ENCODE measurements at regions of chr10 and their contacts with region 1.

Region 1: DNA sequence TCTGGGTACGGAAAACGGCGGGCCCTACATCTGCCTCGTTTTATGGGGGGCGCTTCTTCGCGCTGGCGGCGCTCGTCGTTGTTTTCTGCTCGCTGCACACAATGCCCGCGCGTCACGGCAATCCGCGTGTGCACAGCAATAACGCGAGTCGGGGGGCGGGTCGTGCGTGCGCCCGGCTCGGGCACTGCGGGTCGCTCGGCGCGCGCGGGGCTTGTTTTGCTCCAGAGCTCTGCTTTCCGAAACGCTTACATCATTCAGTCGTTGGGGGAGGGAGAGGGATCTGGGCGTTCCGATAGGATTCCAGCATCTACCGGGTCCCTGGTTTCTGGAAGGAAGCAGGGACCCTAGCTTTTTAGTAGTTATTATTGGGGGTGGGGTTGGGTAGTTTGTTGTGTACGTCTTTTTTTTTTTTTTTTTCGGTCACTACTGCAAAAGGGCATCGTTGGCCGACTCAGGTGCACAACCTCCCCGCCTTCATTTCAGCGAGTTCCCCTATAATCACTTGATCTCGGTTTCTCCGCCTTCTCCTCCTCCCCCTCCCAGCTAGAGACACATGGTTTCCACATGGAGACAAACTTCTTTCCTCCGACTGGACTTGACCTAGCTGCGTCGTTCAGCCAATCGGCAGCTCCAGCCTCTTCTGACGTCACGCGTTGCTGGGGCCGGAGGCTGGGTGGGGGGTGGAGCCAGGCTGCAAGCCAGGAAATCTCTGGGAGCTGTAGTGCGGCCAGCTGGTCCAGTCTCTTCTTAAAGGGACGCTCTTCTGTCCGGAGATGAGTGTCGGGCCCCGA is 3.5 kb downstream of the MXI1 start:
- DNase-seq: peak; percentile 97
- H3K4me3 ChIP-seq: peak overlapping the region; percentile 79
- H3K27ac ChIP-seq: peak overlapping the region; percentile 56
- H3K4me1 ChIP-seq: peaks cover 55% of the 10 kb centered on the region
- CTCF ChIP-seq: peak; percentile 21; the same call in 1 of the 2 replicates

Region 2: DNA sequence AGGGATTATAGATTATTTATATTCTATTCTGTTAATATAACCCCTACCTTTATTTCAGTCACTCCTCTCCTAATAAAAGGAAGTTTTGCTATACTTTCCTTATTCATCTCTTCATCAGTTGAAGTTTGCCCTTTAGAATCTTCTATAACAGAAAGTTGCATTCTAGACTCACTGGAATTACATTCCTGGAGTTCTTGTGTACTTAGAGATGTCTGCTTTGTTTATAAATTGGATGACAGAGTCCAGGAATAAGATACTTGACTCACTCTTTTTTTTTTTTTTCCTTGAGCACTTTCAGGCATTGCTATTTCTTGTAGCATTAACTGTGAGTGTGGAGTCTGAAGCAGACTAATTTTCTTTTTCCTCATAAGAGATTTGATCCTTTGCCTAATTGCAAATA is 928.4 kb before region 1 on chr10:
- CTCF ChIA-PET with region 1: no interaction called
- POLR2A ChIA-PET with region 1: no interaction called
- intact Hi-C with region 1: no loop called
- DNase-seq: no peak
- H3K4me3 ChIP-seq: no peak overlapping the region
- H3K27ac ChIP-seq: no peak overlapping the region
- H3K4me1 ChIP-seq: no peaks in the 10 kb centered on the region
- CTCF ChIP-seq: no peak

Region 3: DNA sequence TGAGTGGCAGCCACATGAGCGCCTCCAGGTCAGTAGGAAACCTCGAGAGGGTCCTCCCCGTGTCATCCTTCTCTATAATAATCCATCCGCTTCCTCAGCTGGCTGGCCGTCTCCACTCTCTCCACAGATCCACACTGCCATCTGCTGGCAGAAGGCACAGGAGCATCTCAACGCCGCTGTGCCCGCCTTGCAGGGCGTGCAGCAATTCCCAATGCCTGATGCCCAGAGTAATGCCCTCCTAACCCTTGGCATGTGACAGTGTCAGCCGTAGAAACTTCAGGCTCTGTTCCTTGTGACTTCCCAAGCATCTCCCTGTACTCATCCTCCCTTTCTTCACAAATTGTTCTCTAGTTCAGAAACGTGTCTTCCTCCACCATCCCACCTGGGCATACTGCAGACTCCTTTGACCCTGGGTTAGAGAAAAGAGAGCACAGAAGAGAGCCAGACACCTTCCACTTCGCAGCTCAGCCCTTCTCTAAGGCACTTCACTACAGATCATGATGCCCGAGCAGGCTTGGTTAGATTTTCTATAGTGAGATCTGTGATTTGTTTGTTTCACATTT is 358.3 kb before region 1 on chr10:
- CTCF ChIA-PET with region 1: interaction called, 10 read pairs
- POLR2A ChIA-PET with region 1: no interaction called
- intact Hi-C with region 1: no loop called
- DNase-seq: peak; percentile 70
- H3K4me3 ChIP-seq: no peak overlapping the region
- H3K27ac ChIP-seq: no peak overlapping the region
- H3K4me1 ChIP-seq: no peaks in the 10 kb centered on the region
- CTCF ChIP-seq: peak; percentile 97

Region 4: GRCh38 chr10:110007701-110008517 is 203.0 kb before region 1 on chr10 and contains the start of gene ADD3:
- CTCF ChIA-PET with region 1: no interaction called
- POLR2A ChIA-PET with region 1: interaction called, 3 read pairs
- intact Hi-C with region 1: loop called (anchors 2 kb)
- DNase-seq: peak; percentile 97
- H3K4me3 ChIP-seq: peak within 1 kb of the TSS; percentile 96
- H3K27ac ChIP-seq: peak within 1 kb of the TSS; percentile 84
- H3K4me1 ChIP-seq: peaks cover 62% of the 10 kb centered on the region
- CTCF ChIP-seq: no peak
- total RNA-seq, gene ADD3: 53.3 and 75.8 TPM in 2 replicates

Region 5: DNA sequence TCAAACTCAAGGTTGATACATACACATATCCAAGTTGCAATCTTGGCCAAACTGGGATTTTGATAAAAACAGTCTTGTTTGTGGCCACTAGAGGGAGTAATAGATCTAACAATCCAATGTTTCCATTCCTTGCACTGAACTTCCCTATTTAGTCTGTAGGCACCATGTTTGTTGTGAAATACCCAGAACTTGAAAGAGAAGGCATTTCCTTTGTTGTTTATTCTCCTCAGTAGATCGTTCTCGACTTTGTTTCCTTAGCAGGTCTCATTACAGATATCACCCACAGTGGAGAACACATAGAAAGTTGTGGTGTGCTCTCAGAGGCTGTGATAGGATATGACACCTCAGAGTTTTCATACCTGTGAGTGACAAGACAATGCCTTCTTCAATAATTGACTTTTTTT is 73.7 kb before region 1 on chr10:
- CTCF ChIA-PET with region 1: no interaction called
- POLR2A ChIA-PET with region 1: interaction called, 4 read pairs
- intact Hi-C with region 1: loop called (anchors 5 kb)
- DNase-seq: peak; percentile 83
- H3K4me3 ChIP-seq: no peak overlapping the region
- H3K27ac ChIP-seq: no peak overlapping the region
- H3K4me1 ChIP-seq: peaks cover 23% of the 10 kb centered on the region
- CTCF ChIP-seq: peak; percentile 98

Region 6: GRCh38 chr10:110279407-110279986 is 68.6 kb after region 1 on chr10:
- CTCF ChIA-PET with region 1: interaction called, 4 read pairs
- POLR2A ChIA-PET with region 1: interaction called, 7 read pairs
- intact Hi-C with region 1: loop called (anchors 2 kb)
- DNase-seq: peak; percentile 73
- H3K4me3 ChIP-seq: peak overlapping the region; percentile 7
- H3K27ac ChIP-seq: no peak overlapping the region
- H3K4me1 ChIP-seq: peaks cover 21% of the 10 kb centered on the region
- CTCF ChIP-seq: peak; percentile 98

Region 7: GRCh38 chr10:110326351-110327032 is 115.6 kb after region 1 on chr10:
- CTCF ChIA-PET with region 1: no interaction called
- POLR2A ChIA-PET with region 1: no interaction called
- intact Hi-C with region 1: no loop called
- DNase-seq: no peak
- H3K4me3 ChIP-seq: no peak overlapping the region
- H3K27ac ChIP-seq: no peak overlapping the region
- H3K4me1 ChIP-seq: no peaks in the 10 kb centered on the region
- CTCF ChIP-seq: no peak

Region 8: DNA sequence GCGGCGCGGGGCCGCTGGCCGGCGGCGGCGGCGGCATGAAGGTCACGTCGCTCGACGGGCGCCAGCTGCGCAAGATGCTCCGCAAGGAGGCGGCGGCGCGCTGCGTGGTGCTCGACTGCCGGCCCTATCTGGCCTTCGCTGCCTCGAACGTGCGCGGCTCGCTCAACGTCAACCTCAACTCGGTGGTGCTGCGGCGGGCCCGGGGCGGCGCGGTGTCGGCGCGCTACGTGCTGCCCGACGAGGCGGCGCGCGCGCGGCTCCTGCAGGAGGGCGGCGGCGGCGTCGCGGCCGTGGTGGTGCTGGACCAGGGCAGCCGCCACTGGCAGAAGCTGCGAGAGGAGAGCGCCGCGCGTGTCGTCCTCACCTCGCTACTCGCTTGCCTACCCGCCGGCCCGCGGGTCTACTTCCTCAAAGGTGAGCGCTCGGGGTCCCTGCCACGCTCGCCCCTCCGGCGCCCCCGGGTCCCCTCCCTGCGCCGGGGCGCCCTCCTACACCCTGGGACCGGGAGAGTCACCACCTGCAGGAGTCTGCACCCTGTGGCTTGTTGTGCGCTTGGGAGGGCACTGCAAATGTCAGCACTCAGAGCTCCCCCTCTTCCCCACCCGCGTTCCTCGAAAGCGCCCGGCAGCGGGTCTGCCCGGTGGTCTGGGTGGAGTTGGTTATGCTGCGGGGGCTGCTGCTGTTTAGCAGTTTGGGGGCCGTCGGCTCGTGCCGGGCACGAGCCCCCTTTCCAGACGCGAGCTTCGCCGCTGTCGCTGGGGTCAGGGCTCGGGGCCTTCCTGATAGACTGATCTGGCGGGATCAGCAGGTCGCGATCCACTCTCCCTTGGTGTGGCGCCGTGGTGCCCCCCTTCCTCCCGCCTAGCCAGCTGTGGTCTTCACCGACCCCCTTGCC is 287.5 kb after region 1 on chr10:
- CTCF ChIA-PET with region 1: no interaction called
- POLR2A ChIA-PET with region 1: no interaction called
- intact Hi-C with region 1: no loop called
- DNase-seq: peak; percentile 44
- H3K4me3 ChIP-seq: peak overlapping the region; percentile 70
- H3K27ac ChIP-seq: no peak overlapping the region
- H3K4me1 ChIP-seq: peaks cover 39% of the 10 kb centered on the region
- CTCF ChIP-seq: no peak

Region 9: DNA sequence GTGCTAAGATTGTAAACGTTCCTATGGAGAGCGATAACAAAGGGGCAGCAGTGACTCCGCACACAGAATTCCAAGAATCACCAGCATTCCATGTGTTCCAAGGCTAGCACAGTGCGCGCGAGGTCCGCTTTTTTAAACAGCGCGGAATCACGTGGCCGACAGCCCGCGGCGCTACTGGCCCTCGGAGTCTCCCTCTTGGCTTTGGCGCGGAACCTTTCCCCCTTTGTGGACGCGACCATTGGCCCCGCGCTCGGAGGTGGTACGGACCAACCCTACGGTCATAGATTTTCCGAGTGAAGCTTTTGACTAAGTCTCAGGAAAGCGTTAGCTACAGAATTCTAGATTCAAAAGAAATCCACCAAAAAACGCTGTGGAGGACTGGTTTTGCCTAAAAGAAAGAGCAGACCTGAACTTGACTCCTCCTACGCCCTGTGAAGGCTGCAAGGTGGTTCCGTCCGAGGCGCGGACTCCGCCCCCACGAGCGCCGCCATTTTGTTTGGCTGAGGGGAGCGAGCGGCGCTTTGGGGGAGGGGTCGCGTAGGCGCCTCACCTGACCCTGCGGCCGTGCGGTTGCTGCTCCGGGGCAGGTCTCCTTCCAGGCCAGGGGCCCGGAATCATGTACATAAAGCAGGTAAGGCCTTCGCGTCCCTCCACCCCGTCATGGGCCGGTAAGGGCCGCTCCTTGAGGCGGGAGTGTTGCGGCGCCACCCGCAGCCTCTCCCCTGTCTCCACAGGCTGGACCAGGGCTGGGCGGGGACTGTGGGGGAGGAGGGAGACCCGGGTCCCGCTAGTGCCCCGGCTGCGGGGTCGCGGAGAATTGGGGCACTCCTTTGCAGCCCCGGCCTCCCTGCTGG is 356.6 kb after region 1 on chr10 and contains the start of gene SMC3:
- CTCF ChIA-PET with region 1: no interaction called
- POLR2A ChIA-PET with region 1: no interaction called
- intact Hi-C with region 1: loop called (anchors 5 kb)
- DNase-seq: peak; percentile 96
- H3K4me3 ChIP-seq: peak within 1 kb of the TSS; percentile 98
- H3K27ac ChIP-seq: peak within 1 kb of the TSS; percentile 60
- H3K4me1 ChIP-seq: peaks cover 52% of the 10 kb centered on the region
- CTCF ChIP-seq: no peak
- total RNA-seq, gene SMC3: 38.4 and 50.0 TPM in 2 replicates

Region 10: DNA sequence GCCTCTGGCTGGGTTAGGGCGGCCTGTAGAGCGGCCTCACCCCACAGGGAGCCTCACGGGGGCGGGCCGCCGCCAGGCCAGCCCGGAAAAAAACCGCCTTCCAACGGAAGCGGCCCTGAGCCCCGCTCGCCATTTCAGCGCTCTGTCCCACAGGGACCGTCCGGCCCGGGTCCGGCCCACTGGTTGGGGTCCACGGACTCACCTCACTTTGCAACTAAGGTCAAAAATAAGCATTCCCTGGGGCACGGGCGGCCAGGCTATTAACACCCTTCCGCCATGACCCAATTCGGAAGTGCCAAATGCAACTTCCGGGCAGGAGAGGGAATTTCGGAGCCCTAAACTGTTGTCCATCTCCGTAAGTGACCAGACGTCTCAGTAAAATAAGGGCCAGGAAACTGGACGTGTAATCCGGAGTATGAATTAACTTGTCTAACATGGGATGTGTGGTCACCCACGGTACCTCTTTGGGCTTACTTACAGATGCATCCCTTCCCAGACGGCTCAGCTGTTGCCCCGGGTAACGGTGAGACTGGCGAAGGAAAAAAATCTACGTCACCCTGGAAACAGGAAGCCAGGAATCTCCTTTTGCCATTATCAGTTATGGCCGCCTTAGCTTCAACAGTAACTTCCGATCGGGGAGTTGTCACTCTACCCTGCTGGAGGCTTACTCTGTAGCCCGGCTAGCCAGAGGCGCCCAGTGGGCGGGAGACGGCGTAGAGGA is 707.9 kb after region 1 on chr10 and contains the start of gene BBIP1:
- CTCF ChIA-PET with region 1: interaction called, 3 read pairs
- POLR2A ChIA-PET with region 1: no interaction called
- intact Hi-C with region 1: loop called (anchors 10 kb)
- DNase-seq: peak; percentile 100
- H3K4me3 ChIP-seq: peak within 1 kb of the TSS; percentile 97
- H3K27ac ChIP-seq: peak within 1 kb of the TSS; percentile 96
- H3K4me1 ChIP-seq: peaks cover 57% of the 10 kb centered on the region
- CTCF ChIP-seq: no peak
- total RNA-seq, gene BBIP1: 8.9 and 34.4 TPM in 2 replicates

Measured in OCI-LY7 (cell line).